ENCODE measurements at regions of chr5 and their contacts with region 1.

Region 1: GRCh38 chr5:10695055-10695649 is 65.9 kb downstream of the DAP start:
- DNase-seq: peak; percentile 88

Region 2: DNA sequence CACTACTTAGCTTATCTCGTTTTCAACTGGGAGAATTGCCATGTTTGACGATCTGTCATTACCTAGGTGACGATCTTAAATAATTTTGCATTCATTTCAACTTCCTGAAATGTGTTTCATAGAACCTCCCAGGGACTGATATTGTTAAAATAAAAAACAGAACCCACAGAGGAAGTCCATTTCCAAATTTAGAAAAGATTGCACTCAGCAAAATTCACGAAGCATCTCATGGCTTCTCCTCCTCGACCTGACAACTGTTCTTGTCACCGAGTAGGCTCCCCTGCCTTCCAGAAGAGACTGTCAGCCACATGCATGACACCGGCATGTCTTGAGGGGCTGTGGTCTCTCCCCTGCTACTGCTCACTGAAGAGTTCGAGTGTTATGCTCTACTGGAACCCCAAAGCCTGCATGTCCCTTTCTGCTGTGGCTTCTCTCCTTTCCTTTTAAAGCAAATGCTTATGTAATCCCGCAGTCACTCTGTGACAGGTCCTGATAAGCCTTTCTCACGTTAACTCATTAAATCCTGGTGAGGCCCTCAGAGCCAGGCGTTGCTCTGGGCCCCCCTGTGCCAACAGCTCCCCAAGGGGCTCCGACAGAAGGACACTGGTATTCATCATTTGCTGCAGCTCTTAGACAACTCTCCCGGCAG is 158.1 kb before region 1 on chr5:
- intact Hi-C with region 1: no loop called
- DNase-seq: no peak

Region 3: DNA sequence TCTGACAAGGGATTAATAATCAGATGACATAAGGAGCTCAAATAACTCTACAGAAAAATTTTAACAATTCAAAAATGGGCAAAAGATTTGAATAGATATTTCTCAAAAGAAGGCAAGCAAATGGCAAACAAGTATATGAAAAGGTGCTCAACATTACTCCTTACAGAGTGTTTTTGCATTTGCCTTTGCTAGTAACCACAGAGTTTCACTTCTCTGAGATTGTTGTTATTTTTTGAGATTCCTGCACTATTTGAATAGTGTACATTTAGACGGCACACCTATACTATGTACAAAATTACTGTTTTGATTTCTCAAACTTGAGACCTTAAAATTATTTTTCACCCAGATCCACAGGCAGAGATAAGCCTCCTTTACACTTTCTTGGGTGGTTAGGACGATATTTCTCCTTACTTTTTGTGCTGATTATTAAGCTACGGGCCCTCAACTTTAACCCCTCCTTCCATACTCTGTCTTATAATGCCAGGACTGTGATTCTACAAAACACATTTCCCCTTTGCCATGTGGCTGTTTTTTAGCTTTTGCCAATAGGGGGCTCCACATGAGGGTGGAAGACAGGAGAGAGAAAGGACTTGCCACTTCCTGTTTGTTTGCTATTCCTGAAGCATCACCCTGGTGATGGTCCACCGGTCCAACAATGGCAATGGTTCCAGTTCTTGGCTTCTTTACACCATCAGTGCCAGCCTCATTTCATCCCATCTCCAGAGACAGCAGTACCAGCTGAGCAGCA is 130.9 kb after region 1 on chr5:
- intact Hi-C with region 1: no loop called
- DNase-seq: no peak

Region 4: DNA sequence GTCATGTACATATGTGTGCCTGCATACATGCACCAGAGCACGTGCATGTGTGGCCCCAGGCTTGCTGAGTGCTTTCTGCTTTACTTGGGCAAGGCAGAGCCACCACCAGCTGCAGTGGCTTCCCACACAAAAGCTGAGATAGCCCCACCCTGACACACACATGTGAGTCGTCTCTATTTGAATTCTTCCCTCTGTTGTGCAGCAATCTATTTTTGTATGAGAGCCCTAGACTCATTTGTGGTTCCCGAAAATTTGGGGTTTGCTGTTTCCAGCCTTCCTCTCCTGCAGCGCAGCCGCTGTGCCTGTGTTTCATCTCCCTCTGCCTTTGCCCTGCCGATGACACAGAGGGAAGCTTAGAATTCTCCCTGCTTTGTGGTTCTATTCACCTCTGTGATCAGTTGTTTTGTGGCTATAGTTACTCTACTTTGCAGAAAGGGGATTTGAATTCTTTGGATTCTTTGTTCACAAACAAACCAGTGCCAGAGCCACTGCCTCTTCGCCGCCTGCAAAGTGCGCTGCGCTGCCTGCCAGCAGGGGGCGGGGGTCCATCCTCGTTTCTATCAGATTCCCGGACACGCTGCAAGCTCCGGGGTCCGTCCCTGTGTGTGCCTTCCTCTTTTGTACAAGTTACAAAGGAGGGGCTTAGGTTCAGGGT is 161.7 kb after region 1 on chr5:
- intact Hi-C with region 1: loop called (anchors 5 kb)
- DNase-seq: no peak

Region 5: DNA sequence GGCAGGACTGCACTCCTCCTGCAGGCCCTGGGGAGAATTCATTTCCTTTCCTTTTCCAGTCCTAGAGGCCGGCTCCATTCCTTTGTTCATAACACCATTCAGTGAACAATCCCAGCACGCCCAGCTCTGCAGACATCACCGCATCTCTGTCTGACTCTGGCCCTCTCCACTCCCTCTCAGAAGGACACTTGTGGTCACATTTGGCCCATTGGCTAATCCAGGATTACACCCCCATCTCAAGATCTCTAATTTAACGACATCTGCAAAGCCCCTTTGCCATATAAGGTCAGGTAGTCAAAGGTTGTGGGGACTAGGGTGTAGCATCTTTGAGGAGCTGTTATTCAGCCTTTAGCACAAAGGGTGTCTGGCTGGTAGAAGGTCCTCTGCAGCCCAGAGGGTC is 250.9 kb after region 1 on chr5:
- intact Hi-C with region 1: no loop called
- DNase-seq: no peak

Region 6: GRCh38 chr5:11719888-11720481 is 1024.8 kb after region 1 on chr5:
- intact Hi-C with region 1: loop called (anchors 10 kb)
- DNase-seq: no peak

Region 7: GRCh38 chr5:12023614-12024241 is 1328.6 kb after region 1 on chr5:
- intact Hi-C with region 1: loop called (anchors 5 kb)
- DNase-seq: no peak